MCF 10A (cell line): ENCODE measurements at regions of chr3 and their contacts with region 1.

Region 1: DNA sequence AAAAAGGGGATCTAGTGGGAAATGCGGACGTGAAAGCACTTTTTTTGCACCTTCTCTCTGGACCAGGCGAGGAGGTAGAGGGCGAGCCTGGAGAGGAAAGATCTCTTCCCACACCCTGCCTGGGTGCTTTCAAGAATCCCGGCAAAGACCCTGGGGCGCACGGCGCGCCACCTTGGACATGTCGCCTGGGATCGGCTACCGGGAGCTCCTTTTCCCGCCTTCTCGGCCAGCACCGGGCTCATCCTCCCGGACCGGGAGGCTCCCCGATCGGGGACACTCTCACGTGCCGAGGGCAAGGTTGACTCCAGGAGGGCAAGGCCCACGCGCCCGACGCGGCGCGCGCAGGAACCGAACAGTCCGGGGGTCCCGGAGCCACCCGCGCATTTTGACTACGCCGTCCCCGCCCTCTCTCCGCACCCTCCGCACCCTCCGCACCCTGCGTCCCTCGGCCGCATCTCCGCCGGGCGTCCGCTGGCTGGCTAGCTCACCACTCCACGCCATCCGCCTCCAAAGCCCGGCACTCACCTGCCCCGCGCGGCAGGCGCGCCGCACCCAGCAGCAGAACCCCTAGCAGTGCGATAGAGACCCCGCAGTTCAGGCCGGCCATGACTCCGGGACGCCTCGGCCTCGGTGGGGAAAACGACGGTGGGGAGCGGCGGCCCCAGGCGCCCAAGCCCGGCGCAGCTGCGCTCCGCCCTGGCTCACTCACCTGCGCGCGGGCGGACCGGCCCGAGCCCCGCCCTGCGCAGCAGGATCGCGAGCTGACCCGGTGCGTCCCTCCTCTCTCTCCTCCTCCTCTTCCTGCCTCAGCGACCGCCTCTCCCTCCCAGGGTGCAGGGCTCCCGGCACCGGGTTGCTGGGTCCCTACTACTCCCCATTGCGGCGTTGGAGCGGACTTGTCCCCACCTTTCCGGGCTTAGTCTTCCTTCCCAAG is at the start of gene CDCP1:
- DNase-seq: peak; percentile 70
- H3K4me3 Mint-ChIP-seq: peak within 1 kb of the TSS; percentile 88
- H3K27ac Mint-ChIP-seq: peak within 1 kb of the TSS; percentile 91
- H3K4me1 Mint-ChIP-seq: peaks cover 22% of the 10 kb centered on the region
- H3K27me3 Mint-ChIP-seq: no peaks in the 10 kb centered on the region
- CTCF ChIP-seq: no peak
- total RNA-seq, gene CDCP1: 180 and 208 TPM in 2 replicates

Region 2: GRCh38 chr3:44721231-44722102 is 424.5 kb before region 1 on chr3:
- CTCF ChIA-PET with region 1: no interaction called
- POLR2A ChIA-PET with region 1: no interaction called
- intact Hi-C with region 1: no loop called
- DNase-seq: peak; percentile 7
- H3K4me3 Mint-ChIP-seq: no peak overlapping the region
- H3K27ac Mint-ChIP-seq: no peak overlapping the region
- H3K4me1 Mint-ChIP-seq: no peaks in the 10 kb centered on the region
- H3K27me3 Mint-ChIP-seq: no peaks in the 10 kb centered on the region
- CTCF ChIP-seq: no peak

Region 3: GRCh38 chr3:45055411-45056143 is 90.4 kb before region 1 on chr3:
- CTCF ChIA-PET with region 1: interaction called, 4 read pairs
- POLR2A ChIA-PET with region 1: interaction called, 14 read pairs
- intact Hi-C with region 1: no loop called
- DNase-seq: peak; percentile 51
- H3K4me3 Mint-ChIP-seq: no peak overlapping the region
- H3K27ac Mint-ChIP-seq: peak overlapping the region; percentile 43
- H3K4me1 Mint-ChIP-seq: peaks cover 49% of the 10 kb centered on the region
- H3K27me3 Mint-ChIP-seq: no peaks in the 10 kb centered on the region
- CTCF ChIP-seq: peak; percentile 11

Region 4: DNA sequence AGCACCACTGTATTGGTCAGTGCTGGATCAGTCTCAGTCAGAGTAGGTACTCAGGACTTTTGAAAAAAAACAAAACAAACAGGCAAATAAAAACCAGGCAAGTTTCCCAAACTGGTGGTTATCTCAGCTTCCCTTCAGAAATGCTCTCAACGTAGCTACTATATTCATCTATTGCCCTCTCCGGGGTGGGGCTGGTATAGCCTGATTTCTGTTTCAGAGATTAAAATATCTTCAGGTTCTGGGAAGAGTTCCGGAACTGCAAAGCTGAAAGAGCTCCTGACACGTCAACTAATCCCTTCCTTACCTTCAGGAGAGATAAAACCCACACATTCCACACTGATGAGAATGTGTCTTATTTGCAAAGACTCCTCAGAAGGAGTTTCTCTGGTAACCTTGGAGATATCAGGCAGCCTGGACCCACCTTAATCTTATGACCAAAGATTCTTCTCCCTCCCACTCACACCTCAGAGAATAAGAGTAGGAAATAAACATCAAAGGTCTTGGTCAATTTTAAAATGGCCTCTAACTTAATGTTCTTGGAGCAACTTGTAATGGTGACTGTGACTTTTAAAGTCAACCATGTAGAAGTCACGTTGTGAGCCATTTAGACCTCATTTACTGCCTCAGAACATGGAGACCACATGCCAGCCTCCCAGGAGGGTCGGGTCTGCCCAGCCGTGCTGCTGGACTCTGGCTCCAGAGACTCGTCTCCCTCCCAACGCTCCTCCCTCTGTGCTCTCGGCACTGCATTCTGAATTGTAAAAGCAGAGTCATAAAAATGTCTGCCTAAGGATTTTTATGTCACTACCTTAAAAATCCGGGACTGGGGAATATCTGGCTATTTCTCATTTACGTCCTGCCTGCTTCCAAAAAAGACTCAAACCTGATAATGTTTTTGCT is 53.6 kb before region 1 on chr3:
- CTCF ChIA-PET with region 1: no interaction called
- POLR2A ChIA-PET with region 1: interaction called, 11 read pairs
- intact Hi-C with region 1: loop called (anchors 5 kb)
- DNase-seq: peak; percentile 71
- H3K4me3 Mint-ChIP-seq: no peak overlapping the region
- H3K27ac Mint-ChIP-seq: peak overlapping the region; percentile 87
- H3K4me1 Mint-ChIP-seq: peaks cover 18% of the 10 kb centered on the region
- H3K27me3 Mint-ChIP-seq: no peaks in the 10 kb centered on the region
- CTCF ChIP-seq: no peak

Region 5: GRCh38 chr3:45167011-45167911 is 21.3 kb after region 1 on chr3:
- CTCF ChIA-PET with region 1: interaction called, 4 read pairs
- POLR2A ChIA-PET with region 1: interaction called, 22 read pairs
- intact Hi-C with region 1: loop called (anchors 1 kb)
- DNase-seq: peak; percentile 97
- H3K4me3 Mint-ChIP-seq: peak overlapping the region; percentile 24
- H3K27ac Mint-ChIP-seq: peak overlapping the region; percentile 94
- H3K4me1 Mint-ChIP-seq: peaks cover 30% of the 10 kb centered on the region
- H3K27me3 Mint-ChIP-seq: no peaks in the 10 kb centered on the region
- CTCF ChIP-seq: no peak

Region 6: GRCh38 chr3:45176912-45177311 is 31.0 kb after region 1 on chr3:
- CTCF ChIA-PET with region 1: no interaction called
- POLR2A ChIA-PET with region 1: interaction called, 10 read pairs
- intact Hi-C with region 1: no loop called
- DNase-seq: no peak
- H3K4me3 Mint-ChIP-seq: no peak overlapping the region
- H3K27ac Mint-ChIP-seq: no peak overlapping the region
- H3K4me1 Mint-ChIP-seq: peaks cover 12% of the 10 kb centered on the region
- H3K27me3 Mint-ChIP-seq: no peaks in the 10 kb centered on the region
- CTCF ChIP-seq: no peak

Region 7: DNA sequence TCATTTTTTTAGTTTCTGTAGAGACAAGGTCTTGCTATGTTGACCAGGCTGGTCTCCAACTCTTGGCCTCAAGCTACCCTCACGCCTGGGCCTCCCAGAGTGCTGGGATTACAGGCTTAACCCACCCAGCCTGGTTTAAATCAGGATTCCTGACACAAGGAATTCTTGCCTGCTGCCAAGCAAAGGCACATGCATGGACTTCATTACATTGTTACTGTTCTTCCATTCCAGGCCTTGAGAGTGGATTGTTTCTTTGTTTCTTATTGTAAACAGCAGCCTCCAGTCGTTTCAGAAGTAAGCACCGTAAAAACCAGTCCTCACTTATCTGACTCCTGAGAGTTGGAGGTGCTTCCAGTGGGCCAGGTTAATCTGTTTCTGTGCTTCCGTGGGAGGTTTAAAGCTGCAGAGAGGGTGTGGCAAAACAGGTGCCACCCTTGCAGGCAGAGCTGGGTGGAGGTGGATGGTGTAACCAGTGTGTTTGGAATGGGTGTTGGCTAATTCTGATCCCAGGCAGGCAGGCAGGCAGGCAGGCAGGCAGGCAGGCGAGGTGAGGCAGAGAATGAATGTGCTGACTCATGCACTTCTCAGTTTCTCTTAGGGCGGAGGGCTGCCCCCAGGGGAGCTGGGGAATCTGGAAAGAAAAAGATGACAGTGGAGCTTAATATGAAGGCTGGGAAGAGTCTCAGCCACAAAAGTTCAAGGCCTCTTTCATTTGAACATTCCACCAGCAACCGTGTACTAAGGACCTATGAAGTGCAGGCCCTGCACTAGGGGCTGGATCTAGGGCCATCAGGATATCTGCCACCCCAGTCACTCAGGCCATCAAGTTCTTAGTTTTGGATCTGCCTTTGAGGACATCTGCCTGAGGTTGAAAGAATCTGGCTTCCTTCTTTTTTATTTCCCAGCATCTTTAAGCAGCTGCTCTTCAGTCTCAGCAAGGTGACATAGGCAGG is 37.2 kb after region 1 on chr3:
- CTCF ChIA-PET with region 1: interaction called, 9 read pairs
- POLR2A ChIA-PET with region 1: interaction called, 31 read pairs
- intact Hi-C with region 1: no loop called
- DNase-seq: peak; percentile 94
- H3K4me3 Mint-ChIP-seq: no peak overlapping the region
- H3K27ac Mint-ChIP-seq: peak overlapping the region; percentile 93
- H3K4me1 Mint-ChIP-seq: peaks cover 36% of the 10 kb centered on the region
- H3K27me3 Mint-ChIP-seq: no peaks in the 10 kb centered on the region
- CTCF ChIP-seq: no peak

Region 8: GRCh38 chr3:45199837-45200648 is 54.1 kb after region 1 on chr3:
- CTCF ChIA-PET with region 1: no interaction called
- POLR2A ChIA-PET with region 1: interaction called, 16 read pairs
- intact Hi-C with region 1: loop called (anchors 2 kb)
- DNase-seq: peak; percentile 94
- H3K4me3 Mint-ChIP-seq: no peak overlapping the region
- H3K27ac Mint-ChIP-seq: peak overlapping the region; percentile 63
- H3K4me1 Mint-ChIP-seq: peaks cover 22% of the 10 kb centered on the region
- H3K27me3 Mint-ChIP-seq: no peaks in the 10 kb centered on the region
- CTCF ChIP-seq: no peak